Mammary epithelial cell (primary cell): ENCODE measurements at regions of chr1 and their contacts with region 1.

Region 1: DNA sequence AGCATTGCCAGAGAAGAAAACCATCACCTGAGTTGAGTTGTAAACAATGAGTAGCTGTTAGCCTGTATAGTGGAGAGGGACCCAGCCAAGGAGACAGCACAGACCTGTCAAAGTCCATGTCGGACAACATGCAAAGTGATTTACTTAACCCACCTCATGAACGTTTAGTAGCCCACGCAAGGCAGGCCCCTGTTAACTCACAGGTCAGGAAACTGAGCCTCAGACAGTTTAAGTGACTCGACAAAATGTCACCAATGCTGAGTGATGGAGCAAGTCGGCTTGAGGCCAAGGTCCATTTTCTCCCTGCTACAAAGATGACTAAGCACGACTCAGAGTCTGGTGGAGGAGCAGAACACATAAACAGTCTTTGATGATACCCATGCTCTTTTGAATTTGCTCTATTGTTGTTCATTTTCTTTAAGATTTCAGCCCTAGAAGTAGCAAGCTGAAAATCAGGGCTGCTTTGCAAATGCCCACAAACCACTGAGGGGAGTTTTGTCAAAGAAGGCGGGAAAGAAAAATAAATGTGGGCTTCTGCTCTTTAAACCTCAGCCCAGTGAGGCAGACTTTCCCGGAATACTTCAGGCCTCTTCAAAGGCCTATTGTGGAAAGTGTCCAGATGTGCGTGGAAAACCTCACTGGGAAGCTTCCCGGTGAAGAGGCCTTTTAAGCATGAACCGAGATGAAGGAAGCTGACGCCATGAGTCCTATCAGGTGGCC is 83.8 kb upstream of the HOOK1 start:
- DNase-seq: peak; percentile 92
- H3K4me3 ChIP-seq: no peak overlapping the region
- H3K27ac ChIP-seq: peak overlapping the region; percentile 64
- H3K4me1 ChIP-seq: peaks cover 30% of the 10 kb centered on the region
- H3K27me3 ChIP-seq: no peaks in the 10 kb centered on the region
- CTCF ChIP-seq: no peak

Region 2: GRCh38 chr1:59596441-59596861 is 134.5 kb before region 1 on chr1:
- CTCF ChIA-PET with region 1: no interaction called
- dilution Hi-C with region 1: no loop called
- in situ Hi-C with region 1: no loop called
- intact Hi-C with region 1: no loop called
- DNase-seq: peak; percentile 98
- H3K4me3 ChIP-seq: no peak overlapping the region
- H3K27ac ChIP-seq: peak overlapping the region; percentile 87
- H3K4me1 ChIP-seq: peaks cover 38% of the 10 kb centered on the region
- H3K27me3 ChIP-seq: no peaks in the 10 kb centered on the region
- CTCF ChIP-seq: no peak

Region 3: DNA sequence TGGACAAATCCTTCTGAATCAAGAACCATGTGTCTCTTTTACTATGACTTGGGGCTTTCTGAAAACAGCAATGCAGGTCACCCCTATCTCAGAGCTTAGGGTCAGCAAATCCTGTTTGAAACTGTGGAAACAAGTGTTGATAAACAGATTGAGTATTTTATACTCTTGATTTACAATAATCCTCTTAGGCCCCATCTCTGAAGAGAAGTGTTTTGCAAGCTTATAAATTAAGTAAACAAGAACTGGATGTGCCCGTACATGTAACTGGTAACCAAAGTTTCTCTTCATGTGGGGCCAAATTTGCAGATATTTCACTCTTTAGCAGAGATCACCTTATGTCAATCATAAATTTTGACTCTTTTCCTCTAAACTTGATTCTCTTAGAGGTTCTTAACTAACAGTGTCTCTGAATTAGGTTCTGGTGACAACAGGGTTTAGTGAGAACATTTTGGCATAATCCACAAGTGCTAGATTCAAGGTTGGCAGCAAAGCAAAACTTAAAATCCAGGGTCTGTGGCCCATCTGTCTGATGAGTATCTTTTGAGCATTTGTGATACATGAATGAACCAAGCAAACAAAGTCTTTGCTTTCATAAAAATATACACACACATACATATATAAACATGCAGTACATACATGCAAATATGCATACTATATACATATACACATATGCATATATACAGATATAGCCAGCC is 99.2 kb before region 1 on chr1:
- CTCF ChIA-PET with region 1: no interaction called
- dilution Hi-C with region 1: no loop called
- in situ Hi-C with region 1: no loop called
- intact Hi-C with region 1: no loop called
- DNase-seq: peak; percentile 36
- H3K4me3 ChIP-seq: no peak overlapping the region
- H3K27ac ChIP-seq: no peak overlapping the region
- H3K4me1 ChIP-seq: peaks cover 19% of the 10 kb centered on the region
- H3K27me3 ChIP-seq: no peaks in the 10 kb centered on the region
- CTCF ChIP-seq: no peak

Region 4: DNA sequence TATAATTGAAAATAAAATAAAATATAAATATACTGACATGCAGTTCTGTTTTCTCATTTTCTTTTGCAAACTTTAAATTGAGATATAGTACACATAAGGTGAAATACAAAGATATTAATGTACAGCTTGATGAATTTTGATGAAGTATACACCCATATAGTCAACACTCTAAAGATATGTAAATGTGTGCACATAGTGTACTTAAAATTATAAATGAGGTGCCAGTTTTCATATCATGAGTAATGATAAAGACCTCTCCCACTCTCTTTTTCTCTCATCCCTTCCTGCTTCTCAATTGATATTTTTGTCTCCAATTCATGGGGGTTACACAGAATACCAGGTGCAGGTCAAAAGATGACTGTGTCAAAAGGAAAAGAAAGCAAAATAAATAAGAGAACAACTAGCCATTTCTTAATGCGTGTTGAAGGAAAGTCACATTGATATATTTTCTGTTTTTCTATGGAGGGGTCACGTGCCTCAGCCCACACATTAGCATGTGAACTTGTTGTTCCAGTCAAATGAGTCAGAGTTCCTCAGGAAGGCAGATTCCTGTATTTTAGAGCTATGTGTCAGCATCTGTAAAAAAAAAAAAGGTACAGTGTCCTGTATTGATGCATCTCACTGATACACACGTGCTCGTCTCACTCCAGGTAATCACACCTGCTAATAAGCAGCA is 19.5 kb after region 1 on chr1:
- CTCF ChIA-PET with region 1: no interaction called
- dilution Hi-C with region 1: no loop called
- in situ Hi-C with region 1: no loop called
- intact Hi-C with region 1: loop called (anchors 2 kb)
- DNase-seq: peak; percentile 88
- H3K4me3 ChIP-seq: peak overlapping the region in 1 of 3 experiments; percentile 18
- H3K27ac ChIP-seq: peak overlapping the region; percentile 62
- H3K4me1 ChIP-seq: peaks cover 23% of the 10 kb centered on the region
- H3K27me3 ChIP-seq: no peaks in the 10 kb centered on the region
- CTCF ChIP-seq: no peak